Breast epithelium (tissue), 4 donors: ENCODE measurements at regions of chr6 and their contacts with region 1.

Region 1: GRCh38 chr6:87907521-87907920 is 140.1 kb upstream of the SPACA1 start:
- DNase-seq: no peak
- H3K4me3 ChIP-seq: no peak overlapping the region
- H3K27ac ChIP-seq: no peak overlapping the region
- H3K4me1 ChIP-seq: no peaks in the 10 kb centered on the region
- H3K27me3 ChIP-seq: no peaks in the 10 kb centered on the region
- CTCF ChIP-seq: no peak
- POLR2A ChIP-seq: no peak

Region 2: GRCh38 chr6:87846434-87846833 is 61.1 kb before region 1 on chr6:
- intact Hi-C with region 1: no loop called
- DNase-seq: no peak
- H3K4me3 ChIP-seq: no peak overlapping the region
- H3K27ac ChIP-seq: no peak overlapping the region
- H3K4me1 ChIP-seq: no peaks in the 10 kb centered on the region
- H3K27me3 ChIP-seq: no peaks in the 10 kb centered on the region
- CTCF ChIP-seq: no peak
- POLR2A ChIP-seq: no peak

Region 3: GRCh38 chr6:87887266-87887665 is 20.3 kb before region 1 on chr6:
- intact Hi-C with region 1: loop called (anchors 1 kb)
- DNase-seq: no peak
- H3K4me3 ChIP-seq: no peak overlapping the region
- H3K27ac ChIP-seq: no peak overlapping the region
- H3K4me1 ChIP-seq: no peaks in the 10 kb centered on the region
- H3K27me3 ChIP-seq: no peaks in the 10 kb centered on the region
- CTCF ChIP-seq: no peak
- POLR2A ChIP-seq: no peak